Caco-2 (cell line): ENCODE measurements at regions of chr4 and their contacts with region 1.

Region 1: GRCh38 chr4:173288296-173288695 is 45.9 kb downstream of the HMGB2 start:
- DNase-seq: peak; percentile 68 to 74
- H3K4me3 ChIP-seq: no peak overlapping the region
- H3K4me3 Mint-ChIP-seq: peak overlapping the region; percentile 62
- H3K27ac Mint-ChIP-seq: no peak overlapping the region
- H3K4me1 ChIP-seq: peaks cover 17% of the 10 kb centered on the region
- H3K4me1 Mint-ChIP-seq: peaks cover 20% of the 10 kb centered on the region
- H3K27me3 ChIP-seq: no peaks in the 10 kb centered on the region
- H3K27me3 Mint-ChIP-seq: no peaks in the 10 kb centered on the region
- CTCF ChIP-seq: peak; percentile 57 to 60

Region 2: GRCh38 chr4:173318648-173319211 is 30.4 kb after region 1 on chr4:
- CTCF ChIA-PET with region 1: no interaction called
- POLR2A ChIA-PET with region 1: no interaction called
- intact Hi-C with region 1: loop called (anchors 1 kb)
- DNase-seq: no peak
- H3K4me3 ChIP-seq: no peak overlapping the region
- H3K4me3 Mint-ChIP-seq: no peak overlapping the region
- H3K27ac Mint-ChIP-seq: no peak overlapping the region
- H3K4me1 ChIP-seq: no peaks in the 10 kb centered on the region
- H3K4me1 Mint-ChIP-seq: peaks cover 7% of the 10 kb centered on the region
- H3K27me3 ChIP-seq: no peaks in the 10 kb centered on the region
- H3K27me3 Mint-ChIP-seq: no peaks in the 10 kb centered on the region
- CTCF ChIP-seq: peak; percentile 12 to 39

Region 3: GRCh38 chr4:173334085-173334772 is 45.9 kb after region 1 on chr4 and contains the start of gene HMGB2:
- CTCF ChIA-PET with region 1: no interaction called
- POLR2A ChIA-PET with region 1: interaction called, 11 read pairs
- intact Hi-C with region 1: no loop called
- DNase-seq: peak; percentile 99 to 100
- H3K4me3 ChIP-seq: peak within 1 kb of the TSS; percentile 84
- H3K4me3 Mint-ChIP-seq: peak within 1 kb of the TSS; percentile 86
- H3K27ac Mint-ChIP-seq: peak within 1 kb of the TSS; percentile 98
- H3K4me1 ChIP-seq: peaks cover 14% of the 10 kb centered on the region
- H3K4me1 Mint-ChIP-seq: peaks cover 15% of the 10 kb centered on the region
- H3K27me3 ChIP-seq: no peaks in the 10 kb centered on the region
- H3K27me3 Mint-ChIP-seq: no peaks in the 10 kb centered on the region
- CTCF ChIP-seq: no peak
- total RNA-seq, gene HMGB2: 272 and 326 TPM in 2 replicates

Region 4: GRCh38 chr4:173360587-173361221 is 72.4 kb after region 1 on chr4:
- CTCF ChIA-PET with region 1: no interaction called
- POLR2A ChIA-PET with region 1: no interaction called
- intact Hi-C with region 1: loop called (anchors 2 kb)
- DNase-seq: no peak
- H3K4me3 ChIP-seq: no peak overlapping the region
- H3K4me3 Mint-ChIP-seq: no peak overlapping the region
- H3K27ac Mint-ChIP-seq: no peak overlapping the region
- H3K4me1 ChIP-seq: no peaks in the 10 kb centered on the region
- H3K4me1 Mint-ChIP-seq: no peaks in the 10 kb centered on the region
- H3K27me3 ChIP-seq: no peaks in the 10 kb centered on the region
- H3K27me3 Mint-ChIP-seq: peaks cover 4% of the 10 kb centered on the region
- CTCF ChIP-seq: peak; percentile 18 to 35

Region 5: GRCh38 chr4:173371292-173372192 is 83.2 kb after region 1 on chr4:
- CTCF ChIA-PET with region 1: no interaction called
- POLR2A ChIA-PET with region 1: no interaction called
- intact Hi-C with region 1: no loop called
- DNase-seq: peak; percentile 51 to 56
- H3K4me3 ChIP-seq: peak overlapping the region; percentile 93
- H3K4me3 Mint-ChIP-seq: peak overlapping the region; percentile 85
- H3K27ac Mint-ChIP-seq: peak overlapping the region; percentile 83
- H3K4me1 ChIP-seq: 0 out of 2 replicates have a peak, but pooled peaks cover 3% of the 10 kb centered on the region
- H3K4me1 Mint-ChIP-seq: peaks cover 6% of the 10 kb centered on the region
- H3K27me3 ChIP-seq: no peaks in the 10 kb centered on the region
- H3K27me3 Mint-ChIP-seq: peaks cover 2% of the 10 kb centered on the region
- CTCF ChIP-seq: no peak

Region 6: DNA sequence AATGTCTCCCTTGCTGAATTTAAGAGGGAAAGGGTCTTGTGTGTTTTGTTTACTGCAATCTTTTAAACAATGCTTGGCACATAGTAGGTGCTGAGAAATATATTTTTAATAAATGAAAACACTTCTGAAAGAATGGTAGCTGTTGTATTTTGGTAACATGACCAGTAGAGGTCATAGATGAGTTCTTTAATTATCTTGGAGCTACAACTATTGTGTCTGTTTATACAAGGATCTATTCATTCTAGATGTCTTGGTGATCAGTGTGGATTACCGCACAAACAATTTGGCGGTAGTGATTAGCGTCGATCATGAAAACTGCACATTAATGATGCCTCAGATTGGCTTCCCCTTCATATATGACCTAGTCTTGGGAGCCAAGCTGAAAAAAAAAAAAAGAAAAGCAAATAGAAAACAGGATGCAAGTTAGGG is 132.0 kb after region 1 on chr4:
- CTCF ChIA-PET with region 1: interaction called, 7 read pairs
- POLR2A ChIA-PET with region 1: no interaction called
- intact Hi-C with region 1: loop called (anchors 1 kb)
- DNase-seq: no peak
- H3K4me3 ChIP-seq: no peak overlapping the region
- H3K4me3 Mint-ChIP-seq: no peak overlapping the region
- H3K27ac Mint-ChIP-seq: no peak overlapping the region
- H3K4me1 ChIP-seq: no peaks in the 10 kb centered on the region
- H3K4me1 Mint-ChIP-seq: peaks cover 5% of the 10 kb centered on the region
- H3K27me3 ChIP-seq: no peaks in the 10 kb centered on the region
- H3K27me3 Mint-ChIP-seq: no peaks in the 10 kb centered on the region
- CTCF ChIP-seq: peak; percentile 33 to 38

Region 7: DNA sequence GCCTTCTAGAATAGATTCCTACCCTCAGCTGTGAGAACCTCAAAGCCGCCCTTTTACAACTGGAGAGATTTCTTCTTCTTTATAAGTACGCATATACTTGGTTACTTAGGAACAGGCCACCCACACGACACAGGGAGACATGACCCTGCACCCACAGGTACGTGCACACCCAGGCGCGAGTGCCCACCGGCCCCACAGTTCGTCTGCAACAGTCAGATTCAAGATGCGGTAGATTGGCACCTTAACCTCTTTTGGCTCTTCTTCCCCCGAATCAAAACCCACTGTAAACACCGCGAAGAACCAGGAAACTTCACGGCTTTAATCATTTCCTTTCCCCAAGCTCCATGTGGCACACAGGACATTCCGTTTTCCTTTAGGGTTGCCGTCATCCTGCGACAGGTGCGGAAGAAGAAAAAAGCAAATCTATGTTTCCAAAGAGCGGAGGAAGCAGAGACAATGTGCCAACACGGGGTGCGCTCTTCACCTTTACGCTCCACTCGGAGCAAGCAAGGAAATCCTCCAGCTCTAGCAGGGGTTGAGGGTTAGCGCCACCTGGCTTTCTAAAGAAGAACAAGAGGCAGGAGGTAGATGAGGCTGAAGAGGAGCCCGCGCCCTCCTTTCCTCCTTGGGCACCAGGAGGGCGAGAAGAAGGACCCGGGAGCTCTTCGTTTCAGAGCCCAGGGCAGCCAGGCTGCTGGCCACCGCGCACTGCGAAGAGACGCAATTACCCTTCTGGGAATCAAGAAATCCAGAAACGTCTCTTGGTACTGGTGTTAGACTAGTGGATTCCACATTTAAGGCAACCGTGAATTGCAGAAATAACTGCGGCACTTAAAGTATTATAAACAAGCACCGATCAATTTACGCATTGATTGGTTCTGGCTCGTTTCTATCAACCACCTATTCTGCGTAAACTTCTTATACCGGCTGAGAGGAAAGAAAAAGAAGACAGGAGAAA is 206.0 kb after region 1 on chr4:
- CTCF ChIA-PET with region 1: no interaction called
- POLR2A ChIA-PET with region 1: no interaction called
- intact Hi-C with region 1: loop called (anchors 1 kb)
- DNase-seq: peak; percentile 68
- H3K4me3 ChIP-seq: peak overlapping the region; percentile 33
- H3K4me3 Mint-ChIP-seq: peak overlapping the region; percentile 69
- H3K27ac Mint-ChIP-seq: no peak overlapping the region
- H3K4me1 ChIP-seq: peaks cover 9% of the 10 kb centered on the region; the same call in 1 of the 2 replicates
- H3K4me1 Mint-ChIP-seq: peaks cover 8% of the 10 kb centered on the region
- H3K27me3 ChIP-seq: no peaks in the 10 kb centered on the region; the same call in 1 of the 2 replicates
- H3K27me3 Mint-ChIP-seq: no peaks in the 10 kb centered on the region
- CTCF ChIP-seq: peak; percentile 65 to 89